ENCODE measurements at regions of chr12 and their contacts with region 1.

Region 1: DNA sequence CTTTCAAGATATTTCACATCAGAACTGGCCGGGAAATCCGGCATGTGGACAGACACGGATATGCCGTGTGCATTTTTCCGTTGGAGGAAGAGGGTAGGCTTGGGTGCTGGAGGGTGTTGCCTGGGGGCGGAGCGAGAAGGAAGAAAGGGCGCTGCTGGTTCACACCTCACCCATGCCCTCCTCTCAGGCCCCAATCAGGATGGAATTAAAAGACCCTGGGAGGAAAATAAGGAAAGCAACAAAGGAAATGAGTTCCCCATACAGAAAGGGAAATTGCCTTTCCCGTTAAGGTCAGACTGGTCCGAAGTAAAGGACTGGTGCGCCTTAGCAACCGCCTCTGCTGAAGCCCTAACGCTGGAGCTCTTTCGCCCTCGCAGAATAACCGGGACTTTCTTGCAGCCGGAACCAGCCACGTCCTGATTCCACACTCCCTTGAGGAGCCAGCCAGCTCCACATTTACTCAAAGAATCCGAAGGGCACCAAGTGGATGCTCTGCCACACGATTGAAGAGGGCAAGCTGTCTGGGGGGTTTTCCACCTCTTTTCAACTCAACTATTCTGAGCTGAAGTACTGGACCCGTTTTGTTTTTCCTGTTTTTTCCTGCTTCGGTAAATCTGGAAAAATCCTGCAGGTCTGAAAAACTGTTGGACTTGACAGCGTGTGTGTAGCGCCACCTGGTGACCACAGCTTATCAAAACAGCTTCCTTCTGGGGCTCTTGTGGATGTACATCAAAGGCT is 37.7 kb upstream of the BCL2L14 start:
- DNase-seq: peak; percentile 81 to 88
- H3K4me3 ChIP-seq: peak overlapping the region; percentile 28; the same call in 1 of the 2 replicates
- H3K27ac ChIP-seq: peak overlapping the region; percentile 14; the same call in 1 of the 2 replicates
- H3K4me1 ChIP-seq: peaks cover 7% of the 10 kb centered on the region
- H3K27me3 ChIP-seq: no peaks in the 10 kb centered on the region
- CTCF ChIP-seq: peak; percentile 95

Region 2: GRCh38 chr12:11500178-11500860 is 532.7 kb before region 1 on chr12:
- CTCF ChIA-PET with region 1: no interaction called
- POLR2A ChIA-PET with region 1: no interaction called
- intact Hi-C with region 1: loop called (anchors 2 kb)
- DNase-seq: peak in 1 of 2 experiments; percentile 90
- H3K4me3 ChIP-seq: no peak overlapping the region
- H3K27ac ChIP-seq: no peak overlapping the region
- H3K4me1 ChIP-seq: no peaks in the 10 kb centered on the region
- H3K27me3 ChIP-seq: no peaks in the 10 kb centered on the region
- CTCF ChIP-seq: no peak

Region 3: GRCh38 chr12:11581179-11581755 is 451.8 kb before region 1 on chr12:
- CTCF ChIA-PET with region 1: interaction called, 33 read pairs
- POLR2A ChIA-PET with region 1: interaction called, 22 read pairs
- intact Hi-C with region 1: loop called (anchors 1 kb)
- DNase-seq: peak; percentile 56 to 82
- H3K4me3 ChIP-seq: no peak overlapping the region
- H3K27ac ChIP-seq: peak overlapping the region; percentile 94
- H3K4me1 ChIP-seq: peaks cover 49% of the 10 kb centered on the region
- H3K27me3 ChIP-seq: no peaks in the 10 kb centered on the region
- CTCF ChIP-seq: peak; percentile 84

Region 4: DNA sequence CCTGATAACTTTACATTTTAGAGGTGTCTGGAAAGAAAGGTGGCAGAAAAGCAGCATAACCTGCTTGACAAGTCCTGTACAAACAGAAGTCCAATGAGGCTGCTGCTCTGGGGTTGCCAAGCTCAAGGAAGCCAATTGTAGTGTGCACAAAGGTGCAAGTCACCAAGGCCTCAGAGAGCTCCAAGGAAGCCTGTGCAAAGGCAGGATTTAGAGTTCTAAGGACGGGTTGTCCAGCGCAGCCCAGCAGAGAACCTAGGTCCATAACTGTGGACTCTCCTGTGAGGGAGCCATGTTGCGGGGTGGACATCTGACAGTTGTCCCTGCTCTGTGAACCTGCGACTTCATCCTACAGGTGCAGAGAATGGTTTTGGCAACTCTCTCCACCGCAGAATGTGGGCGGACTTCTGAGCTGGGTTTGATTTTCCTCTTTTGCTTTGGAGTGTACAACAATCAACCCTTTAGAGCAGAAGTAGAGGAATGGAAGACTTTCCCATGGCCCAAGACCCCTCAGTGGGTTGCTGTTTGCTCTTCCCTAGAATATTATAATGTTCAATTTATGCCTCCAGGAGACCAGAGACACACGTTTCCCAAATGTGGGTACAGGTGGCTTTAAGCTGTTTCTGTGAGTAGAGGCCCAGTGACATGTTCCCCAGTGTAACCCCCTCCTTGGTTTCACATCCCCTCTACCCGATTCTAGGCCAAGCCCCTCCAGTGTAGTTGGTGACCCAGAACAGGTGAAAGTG is 302.6 kb before region 1 on chr12:
- CTCF ChIA-PET with region 1: interaction called, 5 read pairs
- POLR2A ChIA-PET with region 1: no interaction called
- intact Hi-C with region 1: loop called (anchors 5 kb)
- DNase-seq: peak; percentile 83 to 96
- H3K4me3 ChIP-seq: peak overlapping the region; percentile 8; the same call in 1 of the 2 replicates
- H3K27ac ChIP-seq: peak overlapping the region; percentile 87
- H3K4me1 ChIP-seq: peaks cover 44% of the 10 kb centered on the region
- H3K27me3 ChIP-seq: no peaks in the 10 kb centered on the region
- CTCF ChIP-seq: no peak

Region 5: DNA sequence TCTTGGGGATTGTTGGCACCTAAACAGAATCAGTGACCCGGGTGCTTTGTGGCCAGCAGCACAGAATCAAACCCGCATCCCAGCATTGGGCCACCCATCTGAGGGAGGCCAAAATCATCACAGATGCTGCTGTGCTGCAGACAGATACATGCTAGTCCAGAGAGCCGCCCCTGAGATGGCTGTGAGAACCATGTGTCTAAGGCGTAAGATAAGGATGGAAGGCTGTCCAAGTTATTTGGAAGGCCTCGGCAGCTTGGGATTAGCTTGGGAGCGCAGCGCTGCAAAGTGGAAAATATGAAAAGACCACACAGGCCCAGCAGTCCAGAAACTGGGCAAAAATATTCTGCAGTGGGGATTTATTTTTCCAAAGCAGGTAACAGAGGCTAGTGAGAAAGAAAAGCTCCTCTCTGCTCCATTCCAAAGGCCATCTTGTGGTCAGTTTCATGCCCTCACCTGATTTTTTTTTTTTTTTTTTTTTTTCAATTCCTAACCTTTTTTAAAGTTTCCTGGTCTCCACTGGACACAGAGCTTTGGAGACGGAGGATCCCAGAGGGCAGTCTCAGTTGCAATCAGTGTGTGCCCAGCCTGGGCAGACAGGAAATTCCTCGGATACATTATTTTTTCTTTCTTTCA is 141.2 kb before region 1 on chr12:
- CTCF ChIA-PET with region 1: interaction called, 11 read pairs
- POLR2A ChIA-PET with region 1: interaction called, 4 read pairs
- intact Hi-C with region 1: no loop called
- DNase-seq: no peak
- H3K4me3 ChIP-seq: no peak overlapping the region
- H3K27ac ChIP-seq: 0 out of 2 replicates have a peak overlapping the region, but pooled peaks have one; percentile 4
- H3K4me1 ChIP-seq: peaks cover 4% of the 10 kb centered on the region
- H3K27me3 ChIP-seq: no peaks in the 10 kb centered on the region
- CTCF ChIP-seq: peak; percentile 46; the same call in 1 of the 2 replicates

Region 6: GRCh38 chr12:12327802-12328201 is 294.8 kb after region 1 on chr12:
- CTCF ChIA-PET with region 1: interaction called, 20 read pairs
- POLR2A ChIA-PET with region 1: no interaction called
- intact Hi-C with region 1: loop called (anchors 2 kb)
- DNase-seq: peak in 1 of 2 experiments; percentile 57
- H3K4me3 ChIP-seq: no peak overlapping the region
- H3K27ac ChIP-seq: no peak overlapping the region
- H3K4me1 ChIP-seq: peaks cover 19% of the 10 kb centered on the region
- H3K27me3 ChIP-seq: no peaks in the 10 kb centered on the region
- CTCF ChIP-seq: peak; percentile 80